RWPE1 (cell line): ENCODE measurements at regions of chr22 and their contacts with region 1.

Region 1: GRCh38 chr22:39195436-39195835 is 43.0 kb upstream of the CBX7 start:
- DNase-seq: no peak
- H3K27ac ChIP-seq: no peak overlapping the region
- CTCF ChIP-seq: no peak

Region 2: DNA sequence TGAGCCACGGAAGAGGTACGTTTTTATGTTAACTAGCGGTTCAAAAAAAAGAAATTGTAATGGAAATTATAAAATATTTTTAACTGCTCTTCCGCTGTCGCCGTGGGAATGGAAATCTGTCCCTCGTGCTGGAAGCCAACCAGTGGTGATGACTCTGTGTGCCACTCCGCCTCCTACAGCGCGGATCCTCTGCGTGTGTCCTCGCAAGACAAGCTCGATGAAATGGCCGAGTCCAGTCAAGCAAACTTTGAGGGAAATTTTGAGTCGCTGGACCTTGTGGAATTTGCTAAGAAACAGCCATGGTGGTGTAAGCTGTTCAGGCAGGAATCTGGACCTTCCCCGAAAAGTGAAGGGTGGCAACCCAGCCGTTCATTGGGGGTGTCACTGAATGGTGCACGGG is 40.0 kb before region 1 on chr22:
- CTCF ChIA-PET with region 1: no interaction called
- POLR2A ChIA-PET with region 1: interaction called, 12 read pairs
- DNase-seq: no peak
- H3K27ac ChIP-seq: no peak overlapping the region
- CTCF ChIP-seq: no peak